MCF 10A (cell line): ENCODE measurements at regions of chr17 and their contacts with region 1.

Region 1: GRCh38 chr17:47621293-47622178 is 28.2 kb upstream of the KPNB1 start:
- DNase-seq: peak; percentile 87
- H3K4me3 Mint-ChIP-seq: no peak overlapping the region
- H3K27ac Mint-ChIP-seq: peak overlapping the region; percentile 39
- H3K4me1 Mint-ChIP-seq: peaks cover 13% of the 10 kb centered on the region
- H3K27me3 Mint-ChIP-seq: no peaks in the 10 kb centered on the region
- CTCF ChIP-seq: no peak

Region 2: DNA sequence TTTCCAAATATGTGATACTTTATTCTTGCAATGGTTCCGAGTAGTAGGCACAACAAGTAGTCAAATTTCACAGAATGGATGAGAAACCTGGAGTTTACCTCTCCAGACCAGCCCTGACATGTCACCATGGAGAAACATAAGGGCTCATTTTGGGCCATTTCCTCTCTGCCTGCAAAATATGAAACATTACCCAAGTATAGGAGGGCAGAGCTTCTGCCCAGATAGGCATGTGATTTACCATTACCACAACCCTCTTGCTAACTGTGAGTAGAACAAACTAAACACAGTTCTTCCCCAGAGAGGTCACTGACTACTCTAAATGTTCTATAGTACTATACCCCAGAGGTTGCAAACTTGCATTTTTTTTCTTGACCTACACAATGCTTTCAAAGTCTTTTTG is 12.5 kb after region 1 on chr17:
- CTCF ChIA-PET with region 1: no interaction called
- POLR2A ChIA-PET with region 1: interaction called, 10 read pairs
- intact Hi-C with region 1: no loop called
- DNase-seq: no peak
- H3K4me3 Mint-ChIP-seq: no peak overlapping the region
- H3K27ac Mint-ChIP-seq: no peak overlapping the region
- H3K4me1 Mint-ChIP-seq: no peaks in the 10 kb centered on the region
- H3K27me3 Mint-ChIP-seq: no peaks in the 10 kb centered on the region
- CTCF ChIP-seq: no peak

Region 3: GRCh38 chr17:47649153-47649971 is 27.8 kb after region 1 on chr17 and contains the start of gene KPNB1:
- CTCF ChIA-PET with region 1: interaction called, 4 read pairs
- POLR2A ChIA-PET with region 1: interaction called, 31 read pairs
- intact Hi-C with region 1: no loop called
- DNase-seq: peak; percentile 100
- H3K4me3 Mint-ChIP-seq: peak within 1 kb of the TSS; percentile 88
- H3K27ac Mint-ChIP-seq: peak within 1 kb of the TSS; percentile 91
- H3K4me1 Mint-ChIP-seq: peaks cover 26% of the 10 kb centered on the region
- H3K27me3 Mint-ChIP-seq: no peaks in the 10 kb centered on the region
- CTCF ChIP-seq: no peak
- total RNA-seq, gene KPNB1: 522 and 609 TPM in 2 replicates

Region 4: GRCh38 chr17:47774987-47775580 is 153.5 kb after region 1 on chr17:
- CTCF ChIA-PET with region 1: no interaction called
- POLR2A ChIA-PET with region 1: no interaction called
- intact Hi-C with region 1: no loop called
- DNase-seq: no peak
- H3K4me3 Mint-ChIP-seq: no peak overlapping the region
- H3K27ac Mint-ChIP-seq: no peak overlapping the region
- H3K4me1 Mint-ChIP-seq: no peaks in the 10 kb centered on the region
- H3K27me3 Mint-ChIP-seq: peaks cover 37% of the 10 kb centered on the region
- CTCF ChIP-seq: no peak